A549 (cell line): ENCODE measurements at regions of chr15 and their contacts with region 1.

Region 1: GRCh38 chr15:38374556-38374955 is 79.4 kb upstream of the FAM98B start:
- DNase-seq: no peak
- ATAC-seq: no peak
- H3K4me3 ChIP-seq: no peak overlapping the region
- H3K27ac ChIP-seq: no peak overlapping the region
- H3K4me1 ChIP-seq: no peaks in the 10 kb centered on the region
- CTCF ChIP-seq: no peak
- EP300 ChIP-seq: no peak
- POLR2A ChIP-seq: no peak
- RAD21 ChIP-seq: no peak

Region 2: GRCh38 chr15:38389924-38390542 is 15.5 kb after region 1 on chr15:
- CTCF ChIA-PET with region 1: interaction called, 17 read pairs
- POLR2A ChIA-PET with region 1: no interaction called
- DNase-seq: peak; percentile 13 to 50
- ATAC-seq: peak; percentile 59 to 81; a peak in 5 of 6 replicates
- H3K4me3 ChIP-seq: no peak overlapping the region
- H3K27ac ChIP-seq: no peak overlapping the region
- H3K4me1 ChIP-seq: no peaks in the 10 kb centered on the region
- CTCF ChIP-seq: peak; percentile 60
- EP300 ChIP-seq: no peak
- POLR2A ChIP-seq: no peak
- RAD21 ChIP-seq: peak; percentile 57 to 60

Region 3: GRCh38 chr15:38406436-38406835 is 31.9 kb after region 1 on chr15:
- CTCF ChIA-PET with region 1: no interaction called
- POLR2A ChIA-PET with region 1: no interaction called
- DNase-seq: no peak
- ATAC-seq: no peak
- H3K4me3 ChIP-seq: no peak overlapping the region
- H3K27ac ChIP-seq: no peak overlapping the region
- H3K4me1 ChIP-seq: no peaks in the 10 kb centered on the region
- CTCF ChIP-seq: no peak
- EP300 ChIP-seq: no peak
- POLR2A ChIP-seq: no peak
- RAD21 ChIP-seq: no peak